Calu3 (cell line): ENCODE measurements at regions of chr12 and their contacts with region 1.

Region 1: DNA sequence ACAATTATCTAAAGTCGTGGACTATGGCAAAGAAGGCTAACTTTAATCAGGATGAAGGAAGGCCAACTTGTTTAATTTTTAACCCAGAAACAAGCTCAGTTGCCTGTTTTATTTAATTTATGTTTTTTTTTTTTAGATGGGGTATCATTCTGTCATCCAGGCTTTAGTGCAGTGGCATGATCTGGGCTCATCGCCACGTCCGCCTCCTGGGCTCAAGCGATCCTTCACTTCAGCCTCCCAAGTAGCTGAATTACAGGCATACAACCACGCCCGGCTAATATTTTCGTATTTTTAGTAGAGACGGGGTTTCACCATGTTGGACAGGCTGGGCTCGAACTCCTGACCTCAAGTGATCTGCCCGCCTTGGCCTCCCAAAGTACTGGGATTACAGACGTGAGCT is 19.7 kb downstream of the NUDT4 start:
- DNase-seq: no peak
- H3K4me3 Mint-ChIP-seq: no peak overlapping the region
- H3K27ac Mint-ChIP-seq: no peak overlapping the region
- H3K4me1 Mint-ChIP-seq: no peaks in the 10 kb centered on the region
- H3K27me3 Mint-ChIP-seq: no peaks in the 10 kb centered on the region
- CTCF ChIP-seq: no peak

Region 2: GRCh38 chr12:92827836-92828431 is 569.5 kb before region 1 on chr12:
- CTCF ChIA-PET with region 1: no interaction called
- intact Hi-C with region 1: loop called (anchors 5 kb)
- DNase-seq: peak; percentile 41
- H3K4me3 Mint-ChIP-seq: no peak overlapping the region
- H3K27ac Mint-ChIP-seq: no peak overlapping the region
- H3K4me1 Mint-ChIP-seq: no peaks in the 10 kb centered on the region
- H3K27me3 Mint-ChIP-seq: no peaks in the 10 kb centered on the region
- CTCF ChIP-seq: peak; percentile 71

Region 3: DNA sequence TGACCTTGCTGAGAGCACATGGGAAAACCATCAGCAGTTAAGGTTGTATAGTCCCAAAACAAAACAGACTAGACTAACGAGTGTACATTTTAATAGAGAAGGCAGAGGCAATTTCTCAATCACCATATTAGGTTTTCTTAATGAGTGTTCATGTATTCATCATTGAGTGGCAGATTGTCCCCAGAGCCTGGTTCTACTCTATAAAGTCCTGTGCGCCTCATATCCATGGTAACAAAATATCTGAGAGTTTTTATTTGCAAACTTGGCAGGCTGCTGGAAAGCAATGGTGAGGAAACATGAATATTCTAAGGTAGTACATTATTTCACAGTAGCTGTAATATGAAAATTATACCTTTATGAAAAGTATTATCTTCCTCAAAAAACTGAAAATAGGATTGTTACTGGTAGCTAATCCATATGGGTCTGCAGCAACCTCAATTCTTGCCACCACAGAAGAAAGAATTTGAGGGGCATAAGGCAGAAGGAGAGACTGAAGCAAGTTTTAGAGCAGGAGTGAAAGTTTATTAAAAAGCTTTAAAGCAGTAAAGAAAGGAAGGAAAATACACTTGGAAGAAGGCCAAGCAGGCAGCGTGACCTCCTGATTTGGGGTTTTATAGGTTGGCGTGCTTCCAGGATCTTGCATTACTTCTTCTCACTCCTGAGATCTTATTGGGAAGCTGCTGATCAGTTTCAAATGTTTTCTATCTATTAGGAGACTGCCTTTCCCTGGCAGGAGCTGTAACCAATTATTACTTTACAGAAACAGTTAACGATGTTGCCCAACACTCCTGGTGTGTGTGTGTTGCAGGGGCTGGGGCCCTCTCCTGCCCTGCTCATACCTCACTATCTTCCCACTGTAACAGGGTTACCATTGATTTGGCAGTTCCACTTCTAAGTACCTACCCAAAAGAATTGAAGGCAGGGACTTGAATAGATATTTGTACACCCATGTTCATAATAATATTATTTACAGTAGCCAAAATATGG is 173.7 kb before region 1 on chr12:
- CTCF ChIA-PET with region 1: no interaction called
- intact Hi-C with region 1: no loop called
- DNase-seq: peak; percentile 12
- H3K4me3 Mint-ChIP-seq: no peak overlapping the region
- H3K27ac Mint-ChIP-seq: peak overlapping the region; percentile 40
- H3K4me1 Mint-ChIP-seq: peaks cover 20% of the 10 kb centered on the region
- H3K27me3 Mint-ChIP-seq: no peaks in the 10 kb centered on the region
- CTCF ChIP-seq: no peak